CD8-positive, alpha-beta T cell (primary cell): ENCODE measurements at regions of chr6 and their contacts with region 1.

Region 1: GRCh38 chr6:106325336-106326178 is at the start of gene ATG5:
- DNase-seq: peak; percentile 99 to 100 (median 100)
- ATAC-seq: peak; percentile 91
- H3K4me3 ChIP-seq: peak within 1 kb of the TSS; percentile 94 to 96
- H3K4me3 Mint-ChIP-seq: peak within 1 kb of the TSS; percentile 99
- H3K27ac ChIP-seq: peak within 1 kb of the TSS; percentile 90
- H3K27ac Mint-ChIP-seq: peak within 1 kb of the TSS; percentile 96
- H3K4me1 ChIP-seq: peaks cover 28% of the 10 kb centered on the region
- H3K4me1 Mint-ChIP-seq: peaks cover 47% of the 10 kb centered on the region
- H3K27me3 ChIP-seq: no peaks in the 10 kb centered on the region
- H3K27me3 Mint-ChIP-seq: peaks cover 12% of the 10 kb centered on the region
- CTCF ChIP-seq: no peak
- total RNA-seq, gene ATG5: 28.7 to 28.9 TPM

Region 2: DNA sequence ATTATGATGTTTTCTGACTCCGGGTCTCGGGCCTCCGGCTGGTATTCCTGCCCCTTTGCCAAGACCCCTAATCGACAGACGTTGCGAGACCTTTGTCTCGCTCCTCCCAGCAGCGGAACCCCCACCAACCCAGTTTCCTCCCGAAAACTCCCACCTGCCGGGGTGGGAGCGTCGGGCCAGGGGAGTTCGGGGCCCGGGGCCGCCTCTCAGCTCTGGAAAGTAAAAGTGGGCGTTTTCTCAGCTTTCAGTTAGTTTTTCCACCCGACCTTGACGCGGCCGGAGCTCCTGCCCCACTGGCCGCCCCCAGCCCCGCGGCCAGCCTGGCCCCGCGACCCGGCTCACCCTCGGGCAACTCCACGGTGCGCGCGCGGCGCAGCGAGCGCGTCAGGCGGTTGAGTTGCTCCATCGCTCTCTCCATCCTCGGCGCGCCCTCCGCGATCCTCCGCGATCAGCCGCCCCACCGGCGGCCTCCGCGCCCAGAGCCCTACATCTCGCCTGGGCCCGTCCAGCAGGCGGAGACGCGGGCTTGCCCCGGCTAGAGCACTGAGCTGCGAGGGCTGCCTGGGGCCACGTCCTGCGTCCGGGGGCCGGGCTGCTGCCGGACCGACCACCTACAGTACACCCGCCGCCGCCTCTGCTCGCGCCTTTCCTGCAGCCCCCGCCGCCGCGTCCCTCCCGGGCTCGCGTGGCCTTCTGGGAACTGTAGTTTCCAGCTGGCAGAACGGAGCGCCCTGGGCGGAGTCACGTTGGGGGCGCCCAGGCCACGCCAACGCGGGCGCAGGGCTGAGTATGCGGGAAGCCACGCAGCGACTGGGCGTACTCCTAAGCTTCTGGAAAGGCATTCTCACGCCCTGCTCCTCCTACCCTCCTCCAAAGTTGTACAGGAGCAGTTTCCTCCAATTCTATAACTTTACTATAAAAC is 1466.1 kb before region 1 on chr6 and contains the start of gene HACE1:
- CTCF ChIA-PET with region 1: no interaction called
- POLR2A ChIA-PET with region 1: no interaction called
- intact Hi-C with region 1: loop called in 1 of 2 experiments (anchors 10 kb)
- DNase-seq: peak; percentile 74 to 92 (median 89)
- ATAC-seq: peak; percentile 97
- H3K4me3 ChIP-seq: peak within 1 kb of the TSS; percentile 80 to 83
- H3K4me3 Mint-ChIP-seq: peak within 1 kb of the TSS; percentile 93
- H3K27ac ChIP-seq: peak within 1 kb of the TSS; percentile 26 to 56
- H3K27ac Mint-ChIP-seq: peak within 1 kb of the TSS; percentile 85
- H3K4me1 ChIP-seq: peaks cover 10% of the 10 kb centered on the region
- H3K4me1 Mint-ChIP-seq: peaks cover 17% of the 10 kb centered on the region
- H3K27me3 ChIP-seq: no peaks in the 10 kb centered on the region
- H3K27me3 Mint-ChIP-seq: peaks cover 10% of the 10 kb centered on the region
- CTCF ChIP-seq: no peak
- total RNA-seq, gene HACE1: 8.4 to 9.0 TPM

Region 3: GRCh38 chr6:106085984-106086813 is 239.4 kb before region 1 on chr6 and contains the start of gene PRDM1:
- CTCF ChIA-PET with region 1: no interaction called
- POLR2A ChIA-PET with region 1: no interaction called
- intact Hi-C with region 1: loop called in 1 of 2 experiments (anchors 5 kb)
- DNase-seq: peak; percentile 53 to 94 (median 76)
- ATAC-seq: peak; percentile 85
- H3K4me3 ChIP-seq: peak within 1 kb of the TSS; percentile 44 to 45
- H3K4me3 Mint-ChIP-seq: peak within 1 kb of the TSS; percentile 84
- H3K27ac ChIP-seq: no peak within 1 kb of the TSS
- H3K27ac Mint-ChIP-seq: peak within 1 kb of the TSS; percentile 38
- H3K4me1 ChIP-seq: peaks cover 27% of the 10 kb centered on the region
- H3K4me1 Mint-ChIP-seq: peaks cover 70% of the 10 kb centered on the region
- H3K27me3 ChIP-seq: peaks cover 0 to 24% of the 10 kb centered on the region in 2 experiments
- H3K27me3 Mint-ChIP-seq: peaks cover 42% of the 10 kb centered on the region
- CTCF ChIP-seq: no peak
- total RNA-seq, gene PRDM1: 35.5 to 38.4 TPM

Region 4: DNA sequence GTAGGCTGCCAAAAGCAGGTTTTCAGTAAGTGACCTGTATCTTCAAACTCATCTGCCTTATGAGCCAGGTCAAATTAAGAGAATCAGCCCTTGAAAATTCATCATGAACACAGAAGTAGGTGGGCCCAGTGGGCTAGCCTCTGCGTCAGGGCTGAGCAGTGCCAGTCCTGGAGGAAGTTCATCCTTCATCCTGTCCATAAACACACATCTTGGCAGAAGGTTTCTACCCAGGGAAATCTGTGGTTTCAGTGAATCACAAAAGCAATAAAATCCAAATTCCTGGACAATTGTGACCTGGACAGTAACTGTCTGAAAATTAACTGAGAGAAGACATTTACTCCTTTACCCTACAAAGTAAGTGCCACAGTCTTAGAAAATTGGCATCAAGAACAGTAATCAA is 72.4 kb before region 1 on chr6:
- CTCF ChIA-PET with region 1: no interaction called
- POLR2A ChIA-PET with region 1: no interaction called
- intact Hi-C with region 1: no loop called
- DNase-seq: no peak
- ATAC-seq: no peak
- H3K4me3 ChIP-seq: no peak overlapping the region
- H3K4me3 Mint-ChIP-seq: no peak overlapping the region
- H3K27ac ChIP-seq: no peak overlapping the region
- H3K27ac Mint-ChIP-seq: no peak overlapping the region
- H3K4me1 ChIP-seq: no peaks in the 10 kb centered on the region
- H3K4me1 Mint-ChIP-seq: peaks cover 28% of the 10 kb centered on the region
- H3K27me3 ChIP-seq: no peaks in the 10 kb centered on the region
- H3K27me3 Mint-ChIP-seq: no peaks in the 10 kb centered on the region
- CTCF ChIP-seq: no peak

Region 5: GRCh38 chr6:106339334-106340029 is 13.9 kb after region 1 on chr6:
- CTCF ChIA-PET with region 1: interaction called, 16 read pairs
- POLR2A ChIA-PET with region 1: interaction called, 7 read pairs
- intact Hi-C with region 1: no loop called
- DNase-seq: peak in 7 of 9 experiments; percentile 3 to 70 (median 43)
- ATAC-seq: peak; percentile 84
- H3K4me3 ChIP-seq: no peak overlapping the region
- H3K4me3 Mint-ChIP-seq: peak overlapping the region; percentile 33
- H3K27ac ChIP-seq: no peak overlapping the region
- H3K27ac Mint-ChIP-seq: no peak overlapping the region
- H3K4me1 ChIP-seq: no peaks in the 10 kb centered on the region
- H3K4me1 Mint-ChIP-seq: peaks cover 6% of the 10 kb centered on the region
- H3K27me3 ChIP-seq: peaks cover 0 to 2% of the 10 kb centered on the region in 2 experiments
- H3K27me3 Mint-ChIP-seq: peaks cover 23% of the 10 kb centered on the region
- CTCF ChIP-seq: peak; percentile 74

Region 6: DNA sequence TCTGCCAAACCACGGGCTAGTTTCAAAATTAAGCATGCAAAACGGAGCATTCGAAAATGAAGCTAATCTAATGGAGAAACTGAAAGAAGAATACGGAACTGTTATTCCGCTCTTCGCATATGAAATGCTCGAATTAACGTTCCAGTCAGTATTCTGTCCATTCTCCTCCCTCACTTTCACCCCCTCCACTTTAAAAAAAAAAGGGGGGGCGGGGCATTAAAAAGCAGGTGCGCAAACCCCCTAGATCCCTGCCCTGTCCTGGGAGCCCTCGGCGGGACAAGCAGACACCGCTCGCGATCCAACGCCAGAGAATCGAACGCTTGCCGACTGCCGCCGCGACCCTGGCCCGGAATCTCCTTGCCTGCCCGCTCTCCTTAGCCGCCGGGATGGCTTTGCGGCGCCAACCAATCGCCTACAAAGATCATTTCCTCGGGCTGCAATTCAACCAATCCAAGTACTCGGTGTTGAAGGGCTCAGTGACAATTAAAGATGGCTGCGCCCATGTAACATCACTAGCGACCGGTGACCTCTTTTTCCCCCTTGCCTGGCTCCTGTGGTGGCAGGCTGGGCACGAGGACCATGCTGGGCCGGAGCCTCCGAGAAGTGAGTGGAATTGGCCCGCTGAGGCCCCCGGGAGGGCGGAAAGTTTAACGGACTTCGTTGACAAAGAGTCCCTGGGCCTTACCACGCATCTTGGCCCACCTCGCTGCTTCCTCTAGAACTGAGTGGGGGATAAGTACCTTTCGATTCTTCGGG is 303.7 kb after region 1 on chr6 and contains the starts of genes QRSL1 and RTN4IP1:
- CTCF ChIA-PET with region 1: no interaction called
- POLR2A ChIA-PET with region 1: interaction called, 4 read pairs
- intact Hi-C with region 1: loop called (anchors 1 to 5 kb)
- DNase-seq: peak; percentile 70 to 95 (median 82)
- ATAC-seq: peak; percentile 90
- H3K4me3 ChIP-seq: peak within 1 kb of the TSS; percentile 86 to 93
- H3K4me3 Mint-ChIP-seq: peak within 1 kb of the TSS; percentile 99
- H3K27ac ChIP-seq: peak within 1 kb of the TSS; percentile 83 to 88
- H3K27ac Mint-ChIP-seq: peak within 1 kb of the TSS; percentile 99
- H3K4me1 ChIP-seq: peaks cover 19% of the 10 kb centered on the region
- H3K4me1 Mint-ChIP-seq: peaks cover 43% of the 10 kb centered on the region
- H3K27me3 ChIP-seq: no peaks in the 10 kb centered on the region
- H3K27me3 Mint-ChIP-seq: no peaks in the 10 kb centered on the region
- CTCF ChIP-seq: no peak
- total RNA-seq, gene QRSL1: 11.1 to 11.6 TPM
- total RNA-seq, gene RTN4IP1: 1.8 to 1.9 TPM

Region 7: DNA sequence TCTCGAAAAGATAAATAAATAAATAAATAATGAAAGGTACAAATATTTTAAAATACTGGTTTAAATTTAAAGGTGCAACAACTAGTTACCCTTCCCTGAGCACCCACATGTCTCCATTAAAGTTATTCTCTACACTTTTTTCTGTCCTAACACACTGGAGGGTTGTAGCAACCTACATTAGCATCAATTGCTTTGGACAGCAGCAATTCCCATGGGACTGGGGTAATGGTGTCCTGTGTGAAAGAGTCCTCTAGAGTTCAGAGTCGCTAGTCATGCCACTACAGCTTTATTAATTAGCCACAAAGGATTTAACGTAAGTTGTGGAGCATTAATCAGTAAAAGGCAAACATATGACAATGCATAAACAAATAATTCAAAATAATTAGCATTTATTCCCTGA is 663.1 kb after region 1 on chr6:
- CTCF ChIA-PET with region 1: no interaction called
- POLR2A ChIA-PET with region 1: no interaction called
- intact Hi-C with region 1: no loop called
- DNase-seq: no peak
- ATAC-seq: no peak
- H3K4me3 ChIP-seq: no peak overlapping the region
- H3K4me3 Mint-ChIP-seq: no peak overlapping the region
- H3K27ac ChIP-seq: no peak overlapping the region
- H3K27ac Mint-ChIP-seq: no peak overlapping the region
- H3K4me1 ChIP-seq: no peaks in the 10 kb centered on the region
- H3K4me1 Mint-ChIP-seq: no peaks in the 10 kb centered on the region
- H3K27me3 ChIP-seq: no peaks in the 10 kb centered on the region
- H3K27me3 Mint-ChIP-seq: peaks cover 17% of the 10 kb centered on the region
- CTCF ChIP-seq: no peak

Region 8: GRCh38 chr6:107957909-107958688 is 1632.5 kb after region 1 on chr6 and contains the start of gene SEC63:
- CTCF ChIA-PET with region 1: no interaction called
- POLR2A ChIA-PET with region 1: no interaction called
- intact Hi-C with region 1: loop called in 1 of 2 experiments (anchors 10 kb)
- DNase-seq: peak; percentile 95 to 98 (median 96)
- ATAC-seq: peak; percentile 97
- H3K4me3 ChIP-seq: peak within 1 kb of the TSS; percentile 91
- H3K4me3 Mint-ChIP-seq: peak within 1 kb of the TSS; percentile 98
- H3K27ac ChIP-seq: peak within 1 kb of the TSS; percentile 81 to 82
- H3K27ac Mint-ChIP-seq: peak within 1 kb of the TSS; percentile 92
- H3K4me1 ChIP-seq: peaks cover 16% of the 10 kb centered on the region
- H3K4me1 Mint-ChIP-seq: peaks cover 37% of the 10 kb centered on the region
- H3K27me3 ChIP-seq: no peaks in the 10 kb centered on the region
- H3K27me3 Mint-ChIP-seq: no peaks in the 10 kb centered on the region
- CTCF ChIP-seq: no peak
- total RNA-seq, gene SEC63: 77.8 to 88.2 TPM